ENCODE measurements at regions of chr5 and their contacts with region 1.

Region 1: DNA sequence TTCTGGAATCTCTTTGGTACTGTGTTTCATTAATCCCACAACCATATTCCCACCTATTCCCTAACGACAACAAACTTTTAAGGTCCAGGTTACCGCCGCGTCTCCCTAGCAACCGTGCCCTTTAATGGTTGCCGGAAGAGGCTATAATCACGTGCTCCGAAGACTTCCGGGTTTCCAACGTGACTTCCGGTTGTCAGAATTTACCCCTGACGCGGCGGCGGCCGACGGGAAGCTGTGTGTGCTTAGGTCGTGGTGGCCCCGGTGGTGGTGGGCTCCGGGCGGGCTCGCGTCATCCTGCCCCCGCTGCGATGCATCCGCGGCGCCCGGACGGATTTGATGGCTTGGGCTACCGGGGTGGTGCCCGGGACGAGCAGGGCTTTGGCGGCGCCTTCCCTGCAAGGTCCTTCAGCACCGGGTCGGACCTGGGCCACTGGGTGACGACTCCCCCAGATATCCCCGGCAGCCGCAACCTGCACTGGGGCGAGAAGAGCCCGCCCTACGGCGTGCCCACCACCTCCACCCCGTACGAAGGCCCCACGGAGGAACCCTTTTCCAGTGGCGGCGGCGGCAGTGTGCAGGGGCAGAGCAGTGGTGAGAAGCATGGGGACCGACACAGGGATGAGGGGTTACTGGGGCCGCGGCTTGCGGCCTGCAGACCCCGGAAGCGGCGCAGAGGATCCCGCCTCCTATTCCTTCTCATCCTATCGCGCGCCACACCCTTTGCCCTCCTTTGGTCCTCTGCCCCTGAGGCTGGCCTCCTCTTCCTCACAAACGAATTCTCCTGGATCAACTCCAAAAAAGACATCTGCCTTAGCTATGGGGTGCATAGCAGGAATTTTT is at the start of gene SLC25A46:
- DNase-seq: peak; percentile 92
- H3K4me3 ChIP-seq: peak within 1 kb of the TSS; percentile 84
- H3K27ac ChIP-seq: peak within 1 kb of the TSS; percentile 63
- H3K4me1 ChIP-seq: peaks cover 7% of the 10 kb centered on the region
- H3K27me3 ChIP-seq: no peaks in the 10 kb centered on the region
- CTCF ChIP-seq: no peak
- total RNA-seq, gene SLC25A46: 25.2 and 27.2 TPM in 2 replicates

Region 2: GRCh38 chr5:111800356-111800755 is 1061.3 kb after region 1 on chr5:
- CTCF ChIA-PET with region 1: no interaction called
- POLR2A ChIA-PET with region 1: no interaction called
- intact Hi-C with region 1: loop called (anchors 10 kb)
- DNase-seq: no peak
- H3K4me3 ChIP-seq: no peak overlapping the region
- H3K27ac ChIP-seq: no peak overlapping the region
- H3K4me1 ChIP-seq: no peaks in the 10 kb centered on the region
- H3K27me3 ChIP-seq: no peaks in the 10 kb centered on the region
- CTCF ChIP-seq: no peak